SK-N-SH (cell line): ENCODE measurements at regions of chr7 and their contacts with region 1.

Region 1: DNA sequence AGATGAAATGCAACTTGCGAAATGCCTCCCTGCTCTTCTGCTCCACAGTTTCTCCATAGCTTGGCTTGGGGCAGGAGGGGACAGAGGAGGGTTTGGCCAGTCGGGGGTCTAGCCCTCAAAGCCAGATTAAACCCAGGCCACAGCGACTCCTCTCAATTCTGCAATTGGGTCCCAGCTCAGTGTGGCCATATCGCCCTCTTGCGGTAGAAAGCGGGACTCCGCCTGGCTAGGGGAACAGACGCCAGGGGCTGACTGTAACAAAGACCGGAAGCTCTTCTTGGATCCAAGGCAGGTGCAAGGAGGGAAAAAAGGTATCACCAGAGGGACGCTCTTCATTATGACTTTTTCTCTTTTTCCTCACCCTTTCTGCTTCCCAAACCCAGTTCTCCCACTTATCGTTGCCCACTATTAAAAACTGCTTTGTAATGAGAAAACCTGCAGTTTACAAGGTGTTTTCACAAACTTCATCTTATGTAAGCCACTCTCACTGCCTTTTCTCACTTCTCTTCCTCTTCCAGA is 36.6 kb upstream of the TNPO3 start:
- DNase-seq: peak; percentile 91
- H3K4me3 ChIP-seq: peak overlapping the region in 1 of 2 experiments; percentile 14; a peak in 1 of 4 replicates
- H3K27ac ChIP-seq: no peak overlapping the region
- H3K4me1 ChIP-seq: no peaks in the 10 kb centered on the region; a peak in 1 of 4 replicates
- H3K27me3 ChIP-seq: no peaks in the 10 kb centered on the region; the same call in 1 of the 2 replicates
- CTCF ChIP-seq: peak; percentile 100
- EP300 ChIP-seq: no peak
- RAD21 ChIP-seq: peak; percentile 100

Region 2: DNA sequence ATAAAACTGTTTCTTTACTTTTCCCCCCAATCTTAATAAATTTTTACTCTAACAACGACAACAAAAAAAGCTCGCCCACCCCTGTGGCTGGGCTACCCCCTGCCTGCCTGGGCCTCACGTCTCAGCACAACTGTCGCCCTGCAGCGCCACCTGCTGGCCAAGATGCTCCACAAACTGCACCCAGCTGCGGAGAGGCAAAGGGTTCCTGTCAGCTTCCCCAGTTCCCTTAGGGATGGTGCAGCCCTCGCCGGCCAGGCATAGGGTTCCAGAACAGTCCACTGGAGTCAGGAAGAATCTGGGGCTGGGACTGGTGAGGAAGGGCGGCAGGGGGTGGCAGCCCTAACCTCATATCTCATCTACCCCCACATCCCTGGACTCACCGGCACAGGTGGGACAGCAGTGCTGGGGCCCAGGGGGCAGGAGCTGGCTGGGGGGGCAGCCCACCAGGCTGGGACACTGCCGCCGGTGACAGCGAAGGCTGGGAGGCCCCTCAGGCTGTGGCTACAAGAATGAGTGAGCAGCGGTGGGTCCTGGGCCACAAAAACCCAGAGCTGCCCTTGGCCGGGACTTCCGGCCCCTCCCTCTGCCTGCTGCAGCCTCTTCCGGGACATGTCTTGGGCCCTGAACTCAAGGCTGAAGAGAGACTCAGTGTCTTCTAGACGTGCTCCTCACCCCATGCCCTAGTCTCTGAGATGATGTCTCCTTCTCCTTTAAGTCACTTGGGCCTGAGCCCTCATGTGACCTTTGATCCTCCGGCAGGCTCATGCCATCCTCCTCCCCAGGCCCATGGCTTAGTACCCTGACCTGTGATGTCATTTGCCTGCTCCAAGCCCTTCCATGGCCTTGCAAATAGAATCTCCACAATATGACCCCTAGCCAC is 207.7 kb before region 1 on chr7:
- CTCF ChIA-PET with region 1: interaction called, 32 read pairs
- POLR2A ChIA-PET with region 1: no interaction called
- DNase-seq: peak; percentile 96
- H3K4me3 ChIP-seq: no peak overlapping the region
- H3K27ac ChIP-seq: no peak overlapping the region
- H3K4me1 ChIP-seq: peaks cover 0 to 7% of the 10 kb centered on the region in 2 experiments; a peak in 1 of 4 replicates
- H3K27me3 ChIP-seq: no peaks in the 10 kb centered on the region
- CTCF ChIP-seq: peak; percentile 99
- EP300 ChIP-seq: no peak
- RAD21 ChIP-seq: peak; percentile 81

Region 3: GRCh38 chr7:128919881-128920799 is 171.4 kb before region 1 on chr7:
- CTCF ChIA-PET with region 1: interaction called, 16 read pairs
- POLR2A ChIA-PET with region 1: no interaction called
- DNase-seq: peak; percentile 25
- H3K4me3 ChIP-seq: no peak overlapping the region
- H3K27ac ChIP-seq: no peak overlapping the region
- H3K4me1 ChIP-seq: peaks cover 0 to 5% of the 10 kb centered on the region in 2 experiments; a peak in 1 of 4 replicates
- H3K27me3 ChIP-seq: peaks cover 54% of the 10 kb centered on the region
- CTCF ChIP-seq: no peak
- EP300 ChIP-seq: no peak
- RAD21 ChIP-seq: no peak

Region 4: DNA sequence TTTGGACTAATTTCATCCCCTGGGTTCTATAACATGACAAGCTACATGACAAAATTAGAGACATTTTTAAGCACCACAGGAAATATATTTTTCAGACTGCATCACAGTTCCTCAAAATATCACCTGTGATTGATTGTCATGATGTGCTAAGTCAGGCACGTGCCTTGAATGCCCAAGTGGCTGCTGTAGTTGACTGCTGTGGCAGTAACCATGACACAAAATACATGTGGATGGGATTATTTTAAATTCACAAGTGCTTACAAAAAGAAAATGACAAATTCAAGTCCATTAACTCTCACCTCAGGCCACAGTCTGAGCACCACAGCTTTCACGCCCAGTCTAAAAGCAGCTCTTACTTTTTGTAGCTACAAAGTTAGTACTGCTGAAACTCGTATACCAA is 82.1 kb before region 1 on chr7:
- CTCF ChIA-PET with region 1: interaction called, 10 read pairs
- POLR2A ChIA-PET with region 1: no interaction called
- DNase-seq: no peak
- H3K4me3 ChIP-seq: no peak overlapping the region
- H3K27ac ChIP-seq: no peak overlapping the region
- H3K4me1 ChIP-seq: peaks cover 0 to 4% of the 10 kb centered on the region in 2 experiments; a peak in 1 of 4 replicates
- H3K27me3 ChIP-seq: no peaks in the 10 kb centered on the region
- CTCF ChIP-seq: no peak
- EP300 ChIP-seq: no peak
- RAD21 ChIP-seq: no peak

Region 5: DNA sequence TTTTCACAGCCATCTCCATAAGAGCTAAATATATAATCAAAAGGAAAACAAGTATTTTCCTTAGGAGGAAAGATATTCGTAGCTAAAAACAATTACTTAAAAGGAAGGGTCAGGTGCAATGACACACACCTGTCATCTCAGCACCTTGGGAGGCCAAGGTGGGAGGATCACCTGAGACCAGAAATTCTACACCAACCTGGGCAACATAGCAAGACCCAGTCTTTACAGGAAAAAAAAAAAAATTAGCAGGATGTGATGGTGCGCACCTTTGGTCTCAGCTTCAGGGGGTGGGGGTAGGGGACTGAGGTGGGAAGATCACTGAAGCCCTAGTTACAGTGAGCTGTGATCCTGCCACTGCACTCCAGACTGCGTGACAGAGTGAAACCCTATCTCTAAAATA is 48.5 kb before region 1 on chr7:
- CTCF ChIA-PET with region 1: interaction called, 11 read pairs
- POLR2A ChIA-PET with region 1: no interaction called
- DNase-seq: no peak
- H3K4me3 ChIP-seq: no peak overlapping the region
- H3K27ac ChIP-seq: no peak overlapping the region
- H3K4me1 ChIP-seq: peaks cover 0 to 2% of the 10 kb centered on the region in 2 experiments; a peak in 1 of 4 replicates
- H3K27me3 ChIP-seq: no peaks in the 10 kb centered on the region
- CTCF ChIP-seq: no peak
- EP300 ChIP-seq: no peak
- RAD21 ChIP-seq: no peak

Region 6: GRCh38 chr7:129072479-129073011 is 19.0 kb before region 1 on chr7:
- CTCF ChIA-PET with region 1: interaction called, 63 read pairs
- POLR2A ChIA-PET with region 1: no interaction called
- DNase-seq: no peak
- H3K4me3 ChIP-seq: no peak overlapping the region
- H3K27ac ChIP-seq: no peak overlapping the region
- H3K4me1 ChIP-seq: no peaks in the 10 kb centered on the region
- H3K27me3 ChIP-seq: peaks cover 8% of the 10 kb centered on the region; the same call in 1 of the 2 replicates
- CTCF ChIP-seq: no peak
- EP300 ChIP-seq: no peak
- RAD21 ChIP-seq: no peak

Region 7: DNA sequence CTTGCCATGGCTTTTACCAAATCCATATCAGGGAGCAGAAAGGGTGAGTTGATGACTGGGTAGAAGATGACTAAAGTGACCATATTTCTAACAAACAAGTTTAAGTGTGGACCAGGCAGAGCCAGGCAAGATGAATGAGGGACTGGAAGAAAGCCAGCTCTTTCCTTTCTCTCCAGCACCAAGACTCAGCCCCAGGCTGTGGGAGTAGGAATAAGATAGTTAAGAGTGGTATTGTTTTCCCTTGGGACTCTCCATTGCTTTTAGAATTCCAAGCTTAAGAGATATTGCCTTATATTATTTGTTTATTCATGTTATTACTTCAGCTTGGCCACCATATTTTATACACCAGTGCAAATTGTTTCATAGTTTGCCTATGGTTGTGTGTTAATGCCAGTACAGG is 24.1 kb after region 1 on chr7:
- CTCF ChIA-PET with region 1: interaction called, 33 read pairs
- POLR2A ChIA-PET with region 1: no interaction called
- DNase-seq: no peak
- H3K4me3 ChIP-seq: no peak overlapping the region
- H3K27ac ChIP-seq: no peak overlapping the region
- H3K4me1 ChIP-seq: peaks cover 0 to 3% of the 10 kb centered on the region in 2 experiments; a peak in 1 of 4 replicates
- H3K27me3 ChIP-seq: peaks cover 12% of the 10 kb centered on the region; the same call in 1 of the 2 replicates
- CTCF ChIP-seq: no peak
- EP300 ChIP-seq: no peak
- RAD21 ChIP-seq: no peak

Region 8: GRCh38 chr7:129252128-129252527 is 160.6 kb after region 1 on chr7:
- CTCF ChIA-PET with region 1: no interaction called
- POLR2A ChIA-PET with region 1: no interaction called
- DNase-seq: peak; percentile 36
- H3K4me3 ChIP-seq: no peak overlapping the region
- H3K27ac ChIP-seq: no peak overlapping the region
- H3K4me1 ChIP-seq: peaks cover 0 to 6% of the 10 kb centered on the region in 2 experiments; a peak in 3 of 4 replicates
- H3K27me3 ChIP-seq: no peaks in the 10 kb centered on the region
- CTCF ChIP-seq: no peak
- EP300 ChIP-seq: peak in 1 of 2 experiments; percentile 12; a peak in 1 of 4 replicates
- RAD21 ChIP-seq: no peak

Region 9: DNA sequence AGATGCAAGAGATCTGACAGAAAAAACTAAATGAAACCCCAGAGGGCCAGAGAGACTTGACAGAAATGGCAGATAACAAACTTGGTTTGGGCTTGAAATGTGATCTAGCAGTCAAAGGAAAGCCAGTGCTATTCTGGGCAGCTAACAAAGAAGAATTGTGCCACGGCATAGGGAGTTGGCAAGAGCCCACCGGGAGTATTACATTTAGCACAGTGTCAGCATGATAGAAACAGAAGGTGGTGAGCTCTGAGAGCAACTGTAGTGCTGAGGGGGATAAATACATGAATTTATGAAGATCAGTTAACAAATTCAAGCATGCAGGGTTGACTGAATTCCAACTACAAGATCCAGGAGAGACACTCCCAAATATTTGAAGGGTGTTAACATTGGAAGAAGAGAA is 224.4 kb after region 1 on chr7:
- CTCF ChIA-PET with region 1: no interaction called
- POLR2A ChIA-PET with region 1: no interaction called
- DNase-seq: no peak
- H3K4me3 ChIP-seq: no peak overlapping the region
- H3K27ac ChIP-seq: no peak overlapping the region
- H3K4me1 ChIP-seq: no peaks in the 10 kb centered on the region
- H3K27me3 ChIP-seq: no peaks in the 10 kb centered on the region
- CTCF ChIP-seq: no peak
- EP300 ChIP-seq: no peak
- RAD21 ChIP-seq: no peak

Region 10: DNA sequence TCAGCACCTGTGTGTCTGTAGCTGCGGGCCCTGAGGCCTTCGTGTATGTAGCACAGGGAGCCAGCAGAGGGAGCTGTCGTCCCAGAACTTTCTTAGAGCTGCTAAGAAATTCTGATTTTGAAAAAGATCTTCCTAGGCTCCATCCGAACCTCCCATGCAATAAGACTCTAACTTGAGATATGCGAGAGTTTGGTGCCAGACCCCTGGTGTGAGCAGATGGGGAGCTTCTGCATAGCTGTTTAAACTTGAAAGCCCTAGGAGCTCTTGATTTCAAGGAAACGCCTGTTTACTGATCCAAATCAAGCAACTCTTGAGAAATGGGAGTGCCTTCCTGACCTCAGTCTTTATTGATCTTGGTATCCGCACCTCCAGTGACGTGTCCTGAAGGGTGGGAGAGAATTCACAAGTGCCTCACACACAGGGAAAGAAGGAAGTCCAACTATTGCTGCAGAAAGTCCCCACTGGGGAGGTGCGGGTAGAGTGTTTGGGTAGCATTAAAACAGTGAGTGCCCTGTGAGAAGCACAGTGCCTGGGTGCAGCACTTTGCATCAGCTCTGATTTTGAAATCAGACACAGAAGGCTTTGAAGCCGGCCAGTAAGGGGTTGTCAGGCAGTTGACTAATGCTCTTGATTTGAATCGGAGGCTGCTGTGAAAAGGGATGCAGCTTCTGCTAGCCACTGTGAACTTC is 276.3 kb after region 1 on chr7:
- CTCF ChIA-PET with region 1: no interaction called
- POLR2A ChIA-PET with region 1: no interaction called
- DNase-seq: peak; percentile 80
- H3K4me3 ChIP-seq: no peak overlapping the region; a peak in 1 of 4 replicates
- H3K27ac ChIP-seq: no peak overlapping the region
- H3K4me1 ChIP-seq: peaks cover 0 to 3% of the 10 kb centered on the region in 2 experiments; a peak in 1 of 4 replicates
- H3K27me3 ChIP-seq: no peaks in the 10 kb centered on the region
- CTCF ChIP-seq: peak; percentile 99
- EP300 ChIP-seq: no peak
- RAD21 ChIP-seq: peak; percentile 96